PC-9 (cell line): ENCODE measurements at regions of chr16 and their contacts with region 1.

Region 1: GRCh38 chr16:67052399-67052798 is 23.4 kb downstream of the CBFB start:
- DNase-seq: no peak
- H3K4me3 ChIP-seq: no peak overlapping the region
- H3K27ac ChIP-seq: no peak overlapping the region
- H3K4me1 ChIP-seq: peaks cover 12% of the 10 kb centered on the region
- H3K27me3 ChIP-seq: no peaks in the 10 kb centered on the region
- CTCF ChIP-seq: no peak

Region 2: DNA sequence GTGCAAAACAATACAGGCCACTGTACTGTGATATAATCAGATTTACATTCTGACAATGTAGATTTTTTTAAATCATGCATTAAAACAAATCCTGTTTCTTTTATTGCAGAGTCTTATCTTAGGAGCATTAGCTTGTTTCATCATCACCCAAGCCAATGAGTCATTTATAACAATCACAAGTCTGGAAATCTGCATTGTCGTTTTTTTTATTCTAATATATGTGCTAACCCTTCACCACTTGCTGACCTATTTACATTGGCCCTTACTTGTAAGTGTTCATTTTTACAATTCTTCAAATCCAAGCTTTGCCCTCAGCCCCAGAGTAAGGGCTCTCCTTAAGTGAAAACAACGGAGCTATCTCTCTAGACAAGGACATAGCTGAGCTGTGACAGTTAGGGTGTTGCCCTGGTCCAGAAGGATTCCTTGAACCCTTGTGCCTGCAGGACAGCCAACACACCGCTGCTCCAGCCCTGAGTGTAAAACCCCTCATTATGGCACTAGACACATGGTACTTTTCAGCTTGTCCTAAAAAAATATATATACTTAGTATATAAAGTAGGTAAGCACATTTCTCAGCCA is 482.5 kb before region 1 on chr16:
- CTCF ChIA-PET with region 1: no interaction called
- POLR2A ChIA-PET with region 1: no interaction called
- intact Hi-C with region 1: no loop called
- DNase-seq: peak in 1 of 2 experiments; percentile 76
- H3K4me3 ChIP-seq: no peak overlapping the region
- H3K27ac ChIP-seq: peak overlapping the region; percentile 22
- H3K4me1 ChIP-seq: peaks cover 22% of the 10 kb centered on the region
- H3K27me3 ChIP-seq: no peaks in the 10 kb centered on the region
- CTCF ChIP-seq: no peak

Region 3: DNA sequence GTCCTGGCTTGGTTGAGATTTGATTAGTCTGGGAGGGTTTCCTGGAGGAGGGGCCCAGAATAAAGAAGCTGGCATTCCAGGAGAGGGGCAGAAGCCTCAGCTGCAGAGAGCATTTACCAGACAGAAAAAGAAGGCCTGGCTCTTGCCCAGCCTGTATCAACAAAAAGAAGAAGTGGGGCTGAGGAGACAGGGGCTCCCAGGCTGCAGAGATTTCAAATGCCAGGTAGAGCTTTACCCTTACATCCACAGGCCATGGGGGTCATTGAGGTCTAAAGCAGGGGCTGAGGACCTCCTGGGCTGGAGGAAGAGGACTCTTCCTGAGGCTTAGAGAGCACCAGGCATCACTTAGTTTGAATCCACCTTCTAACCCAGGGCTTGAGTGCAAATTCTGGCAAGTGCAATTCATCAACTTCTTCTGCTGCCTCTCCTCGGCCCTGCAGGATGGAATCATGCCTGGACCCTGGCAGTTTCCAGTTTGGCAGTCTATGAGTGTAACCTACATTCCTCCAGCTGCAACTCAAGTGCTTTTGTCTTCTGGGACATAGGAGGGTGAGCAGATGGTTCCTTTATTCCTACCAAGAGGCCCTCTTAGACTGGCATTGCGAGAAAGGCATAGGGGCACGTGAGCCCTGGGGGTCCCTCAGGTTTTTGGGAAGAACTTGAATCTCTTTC is 192.9 kb before region 1 on chr16:
- CTCF ChIA-PET with region 1: no interaction called
- POLR2A ChIA-PET with region 1: no interaction called
- intact Hi-C with region 1: no loop called
- DNase-seq: no peak
- H3K4me3 ChIP-seq: no peak overlapping the region
- H3K27ac ChIP-seq: no peak overlapping the region
- H3K4me1 ChIP-seq: no peaks in the 10 kb centered on the region
- H3K27me3 ChIP-seq: no peaks in the 10 kb centered on the region
- CTCF ChIP-seq: no peak

Region 4: GRCh38 chr16:67034487-67034886 is 17.9 kb before region 1 on chr16:
- CTCF ChIA-PET with region 1: no interaction called
- POLR2A ChIA-PET with region 1: interaction called, 12 read pairs
- intact Hi-C with region 1: no loop called
- DNase-seq: no peak
- H3K4me3 ChIP-seq: no peak overlapping the region
- H3K27ac ChIP-seq: no peak overlapping the region
- H3K4me1 ChIP-seq: peaks cover 13% of the 10 kb centered on the region
- H3K27me3 ChIP-seq: no peaks in the 10 kb centered on the region
- CTCF ChIP-seq: no peak

Region 5: GRCh38 chr16:67084345-67085028 is 32.1 kb after region 1 on chr16:
- CTCF ChIA-PET with region 1: no interaction called
- POLR2A ChIA-PET with region 1: no interaction called
- intact Hi-C with region 1: no loop called
- DNase-seq: no peak
- H3K4me3 ChIP-seq: no peak overlapping the region
- H3K27ac ChIP-seq: no peak overlapping the region
- H3K4me1 ChIP-seq: no peaks in the 10 kb centered on the region
- H3K27me3 ChIP-seq: no peaks in the 10 kb centered on the region
- CTCF ChIP-seq: no peak

Region 6: DNA sequence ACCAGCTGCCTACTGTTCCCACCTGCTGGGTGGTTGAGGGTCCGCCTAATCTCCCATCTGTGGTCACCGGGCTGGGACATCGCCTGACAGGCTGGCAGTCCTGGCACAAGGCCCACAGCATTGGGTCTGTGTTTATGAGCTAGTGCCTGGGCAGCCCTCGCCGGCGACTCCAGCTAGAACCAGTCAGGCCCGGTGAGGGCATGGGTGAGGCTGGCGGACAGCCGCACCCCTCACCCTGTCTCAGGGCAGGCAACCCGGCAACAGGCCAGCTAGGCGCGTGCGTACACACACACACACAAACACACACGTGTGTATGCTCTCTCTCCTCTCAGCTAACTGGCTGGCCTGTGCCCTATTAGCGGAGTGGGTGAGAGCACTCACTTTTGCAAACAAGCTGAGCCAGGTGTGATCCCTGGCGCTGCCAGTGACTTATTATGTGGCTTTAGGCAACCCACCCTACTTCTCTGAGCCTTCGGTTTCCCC is 388.9 kb after region 1 on chr16:
- CTCF ChIA-PET with region 1: interaction called, 11 read pairs
- POLR2A ChIA-PET with region 1: no interaction called
- intact Hi-C with region 1: no loop called
- DNase-seq: peak; percentile 8 to 70
- H3K4me3 ChIP-seq: no peak overlapping the region
- H3K27ac ChIP-seq: no peak overlapping the region
- H3K4me1 ChIP-seq: no peaks in the 10 kb centered on the region
- H3K27me3 ChIP-seq: no peaks in the 10 kb centered on the region
- CTCF ChIP-seq: no peak